ENCODE measurements at regions of chr10 and their contacts with region 1.

Region 1: GRCh38 chr10:75099952-75100763 is 11.3 kb upstream of the SAMD8 start:
- DNase-seq: peak; percentile 87
- H3K4me3 Mint-ChIP-seq: no peak overlapping the region
- H3K27ac Mint-ChIP-seq: no peak overlapping the region
- H3K4me1 Mint-ChIP-seq: no peaks in the 10 kb centered on the region
- H3K27me3 Mint-ChIP-seq: no peaks in the 10 kb centered on the region

Region 2: GRCh38 chr10:74244097-74244685 is 856.0 kb before region 1 on chr10:
- CTCF ChIA-PET with region 1: interaction called, 10 read pairs
- POLR2A ChIA-PET with region 1: interaction called, 4 read pairs
- intact Hi-C with region 1: loop called (anchors 5 kb)
- DNase-seq: no peak
- H3K4me3 Mint-ChIP-seq: no peak overlapping the region
- H3K27ac Mint-ChIP-seq: no peak overlapping the region
- H3K4me1 Mint-ChIP-seq: no peaks in the 10 kb centered on the region
- H3K27me3 Mint-ChIP-seq: no peaks in the 10 kb centered on the region

Region 3: DNA sequence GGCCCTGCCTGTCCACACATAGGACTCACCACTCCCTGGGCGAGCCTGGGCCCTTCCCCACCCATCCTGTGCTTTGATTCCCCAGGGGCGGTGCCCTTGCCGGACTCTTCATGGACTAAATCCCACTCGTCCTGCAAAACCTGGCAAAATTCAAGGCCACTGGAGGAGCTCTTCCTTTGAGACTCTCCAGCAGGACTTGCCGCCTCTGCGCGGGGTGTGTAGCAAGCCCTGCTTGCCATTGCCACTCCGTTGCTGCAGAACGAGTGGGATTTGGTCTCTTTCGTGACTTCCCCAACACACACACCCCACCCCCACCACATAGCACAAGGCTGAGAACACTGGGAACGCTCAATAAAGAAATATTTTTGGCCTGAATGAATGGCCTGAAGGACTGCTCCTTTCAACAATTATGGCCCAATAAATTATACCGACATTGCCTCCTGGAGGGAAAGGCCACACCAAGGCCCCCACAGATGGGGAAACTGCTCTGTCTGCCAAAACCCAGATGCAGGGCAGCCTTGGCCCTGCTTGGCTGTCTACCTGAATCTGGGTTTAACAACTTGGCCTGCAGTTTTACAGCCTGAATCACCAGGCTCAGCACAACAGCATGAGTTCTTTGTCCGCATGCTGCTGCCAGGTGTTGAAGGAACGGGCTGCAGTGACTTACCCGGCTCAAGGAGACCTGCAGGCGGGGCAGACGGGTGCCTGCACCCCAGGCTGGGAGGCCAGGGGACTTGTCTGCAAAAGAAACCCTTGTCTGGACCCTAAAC is 346.5 kb before region 1 on chr10:
- CTCF ChIA-PET with region 1: no interaction called
- POLR2A ChIA-PET with region 1: no interaction called
- intact Hi-C with region 1: loop called (anchors 10 kb)
- DNase-seq: no peak
- H3K4me3 Mint-ChIP-seq: no peak overlapping the region
- H3K27ac Mint-ChIP-seq: no peak overlapping the region
- H3K4me1 Mint-ChIP-seq: peaks cover 7% of the 10 kb centered on the region
- H3K27me3 Mint-ChIP-seq: no peaks in the 10 kb centered on the region

Region 4: GRCh38 chr10:75070961-75071428 is 29.2 kb before region 1 on chr10:
- CTCF ChIA-PET with region 1: no interaction called
- POLR2A ChIA-PET with region 1: no interaction called
- intact Hi-C with region 1: no loop called
- DNase-seq: no peak
- H3K4me3 Mint-ChIP-seq: no peak overlapping the region
- H3K27ac Mint-ChIP-seq: no peak overlapping the region
- H3K4me1 Mint-ChIP-seq: peaks cover 10% of the 10 kb centered on the region
- H3K27me3 Mint-ChIP-seq: no peaks in the 10 kb centered on the region

Region 5: GRCh38 chr10:76036111-76036940 is 936.2 kb after region 1 on chr10:
- CTCF ChIA-PET with region 1: no interaction called
- POLR2A ChIA-PET with region 1: no interaction called
- intact Hi-C with region 1: no loop called
- DNase-seq: peak; percentile 57
- H3K4me3 Mint-ChIP-seq: no peak overlapping the region
- H3K27ac Mint-ChIP-seq: no peak overlapping the region
- H3K4me1 Mint-ChIP-seq: no peaks in the 10 kb centered on the region
- H3K27me3 Mint-ChIP-seq: peaks cover 1% of the 10 kb centered on the region

Measured in activated CD4-positive, alpha-beta memory T cell treated with anti-CD3 and anti-CD28 coated beads for 36 hours (primary cell).